Motor neuron (in vitro differentiated cells): ENCODE measurements at regions of chr6 and their contacts with region 1.

Region 1: DNA sequence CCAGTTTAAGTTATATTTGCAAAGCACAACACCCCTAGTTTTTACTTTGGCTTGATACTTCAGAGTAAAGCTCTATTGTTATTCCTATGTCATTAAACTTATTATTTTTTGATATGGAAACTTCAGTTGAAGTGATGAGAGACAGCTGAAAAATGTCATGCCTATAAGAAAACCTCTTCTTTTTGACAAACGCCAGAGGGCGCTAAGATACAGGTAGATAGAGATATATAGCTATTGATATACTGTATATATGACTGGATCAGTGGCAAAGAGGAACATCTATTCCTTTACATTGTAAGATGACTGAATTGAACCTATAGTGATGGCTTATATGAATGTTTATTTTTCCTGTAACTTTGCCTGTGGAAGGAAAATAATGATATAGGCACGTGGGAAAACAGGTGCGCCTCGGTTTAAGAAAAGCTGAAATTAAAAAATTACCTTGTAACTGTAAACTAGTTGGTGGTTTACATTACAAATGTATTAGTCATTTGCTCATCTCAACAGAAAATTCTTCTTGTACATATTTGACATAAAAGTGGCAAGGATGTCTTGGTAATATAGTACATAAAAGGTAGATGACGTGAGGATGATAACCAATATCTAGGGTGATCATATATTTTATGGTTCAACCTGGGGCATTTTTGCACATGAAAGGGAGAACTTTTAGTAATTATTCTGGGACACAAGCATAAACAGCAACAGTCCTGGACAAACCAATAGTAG is 74.1 kb downstream of the LAMA4 start:
- ATAC-seq: peak; percentile 4 to 78 (median 66)
- H3K4me3 ChIP-seq: no peak overlapping the region
- H3K27ac ChIP-seq: no peak overlapping the region
- H3K4me1 ChIP-seq: peaks cover 13 to 37% of the 10 kb centered on the region in 2 donors

Region 2: GRCh38 chr6:111631903-111632460 is 548.3 kb before region 1 on chr6:
- in situ Hi-C with region 1: no loop called
- ATAC-seq: peak in 3 of 8 experiments; percentile 57 to 63 (median 61)
- H3K4me3 ChIP-seq: no peak overlapping the region
- H3K27ac ChIP-seq: no peak overlapping the region
- H3K4me1 ChIP-seq: no peaks in the 10 kb centered on the region

Region 3: DNA sequence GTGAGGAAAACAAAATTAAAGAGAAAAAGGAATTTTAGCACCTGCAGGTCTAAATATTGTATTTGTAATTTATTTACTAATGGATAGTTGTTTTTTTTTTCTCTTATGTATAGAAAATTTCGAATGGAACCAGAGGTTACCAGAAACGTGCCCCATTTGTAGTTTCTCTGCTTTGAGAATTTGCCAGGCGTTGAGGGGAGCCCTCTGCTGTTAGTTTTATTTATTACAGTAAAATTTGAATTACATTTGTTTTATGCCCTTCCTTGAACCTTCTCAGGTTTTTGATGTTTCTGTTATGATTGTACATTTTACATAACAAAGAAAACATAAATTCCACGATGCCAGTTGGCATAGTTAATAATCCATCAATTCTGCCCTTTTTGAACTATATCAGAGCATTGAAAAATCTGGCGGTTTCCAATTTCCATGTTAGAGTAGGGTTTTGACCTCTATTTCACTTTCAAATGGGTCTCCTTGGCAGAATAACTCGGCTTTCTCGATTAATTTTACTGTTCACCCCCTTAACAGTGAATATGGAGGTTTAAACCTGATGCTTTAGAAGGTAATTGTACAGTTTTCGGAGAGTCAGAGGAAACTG is 131.8 kb after region 1 on chr6:
- in situ Hi-C with region 1: loop called in 6 of 9 experiments (anchors 25 kb)
- ATAC-seq: peak in 3 of 8 experiments; percentile 30 to 52 (median 45)
- H3K4me3 ChIP-seq: no peak overlapping the region
- H3K27ac ChIP-seq: no peak overlapping the region
- H3K4me1 ChIP-seq: peaks cover 4 to 7% of the 10 kb centered on the region in 2 donors

Region 4: GRCh38 chr6:112360498-112360897 is 180.2 kb after region 1 on chr6:
- in situ Hi-C with region 1: no loop called
- ATAC-seq: peak in 5 of 8 experiments; percentile 32 to 75 (median 53)
- H3K4me3 ChIP-seq: no peak overlapping the region
- H3K27ac ChIP-seq: no peak overlapping the region
- H3K4me1 ChIP-seq: peaks cover 6 to 9% of the 10 kb centered on the region in 2 donors

Region 5: DNA sequence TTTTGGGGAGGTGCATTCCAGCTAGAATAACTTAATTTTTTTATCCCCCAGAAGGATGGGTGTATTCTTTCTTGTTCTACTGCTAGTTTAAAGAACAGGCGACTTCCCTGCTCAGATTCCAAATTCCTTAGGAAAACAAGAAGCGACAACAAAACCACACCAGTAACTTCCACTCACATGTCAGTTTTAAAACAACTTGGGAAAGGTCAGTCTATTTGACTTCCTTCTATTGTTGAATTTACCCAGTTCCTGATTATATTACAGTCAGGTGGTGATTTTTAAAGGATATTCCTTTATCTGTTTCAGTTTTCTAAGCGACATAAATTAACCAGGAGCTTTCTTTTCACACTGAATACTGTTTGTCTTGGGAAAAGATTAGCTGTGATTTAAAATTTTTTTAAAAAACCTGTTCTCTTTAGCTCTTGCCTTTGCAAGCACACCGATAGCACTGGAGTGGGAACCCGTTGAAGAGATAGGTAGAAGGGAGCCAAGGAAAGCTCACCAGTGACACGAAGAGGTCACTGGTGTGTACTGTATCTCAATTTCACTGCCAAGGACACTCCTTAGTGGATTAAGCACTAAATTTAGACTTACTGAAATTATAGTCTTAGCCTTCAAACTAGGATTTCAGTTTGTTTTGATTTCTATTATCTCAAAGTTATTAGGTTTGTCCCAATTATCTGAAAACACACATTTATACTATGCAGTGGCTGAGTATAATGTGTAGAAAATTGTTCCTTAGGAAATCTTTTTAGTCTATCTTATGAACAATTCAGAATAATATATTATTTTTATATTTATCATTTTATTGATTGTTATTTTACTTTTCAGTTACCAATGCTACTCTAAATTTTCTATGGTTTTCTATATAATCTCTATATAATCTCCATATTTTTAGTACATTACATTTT is 1699.2 kb after region 1 on chr6:
- in situ Hi-C with region 1: loop called in 1 of 9 experiments (anchors 10 kb)
- ATAC-seq: peak; percentile 80 to 100 (median 99)
- H3K4me3 ChIP-seq: no peak overlapping the region
- H3K27ac ChIP-seq: no peak overlapping the region
- H3K4me1 ChIP-seq: peaks cover 0 to 4% of the 10 kb centered on the region in 2 donors

Region 6: GRCh38 chr6:113909234-113909856 is 1729.1 kb after region 1 on chr6:
- in situ Hi-C with region 1: loop called in 1 of 9 experiments (anchors 25 kb)
- ATAC-seq: peak in 5 of 8 experiments; percentile 29 to 62 (median 44)
- H3K4me3 ChIP-seq: no peak overlapping the region
- H3K27ac ChIP-seq: no peak overlapping the region
- H3K4me1 ChIP-seq: no peaks in the 10 kb centered on the region